Natural killer cell (primary cell): ENCODE measurements at regions of chr11 and their contacts with region 1.

Region 1: GRCh38 chr11:100575870-100576705 is 111.0 kb upstream of the ARHGAP42 start:
- DNase-seq: peak in 1 of 2 donors; percentile 20
- ATAC-seq: peak; percentile 64 to 76 (median 68)
- H3K4me3 ChIP-seq: no peak overlapping the region
- H3K4me3 Mint-ChIP-seq: no peak overlapping the region
- H3K27ac ChIP-seq: no peak overlapping the region
- H3K27ac Mint-ChIP-seq: no peak overlapping the region
- H3K4me1 ChIP-seq: no peaks in the 10 kb centered on the region
- H3K4me1 Mint-ChIP-seq: no peaks in the 10 kb centered on the region
- H3K27me3 ChIP-seq: peaks cover 4% of the 10 kb centered on the region
- H3K27me3 Mint-ChIP-seq: peaks cover 6 to 7% of the 10 kb centered on the region in 2 donors
- CTCF ChIP-seq: peak; percentile 82

Region 2: GRCh38 chr11:100855466-100856067 is 279.5 kb after region 1 on chr11:
- intact Hi-C with region 1: loop called (anchors 1 kb)
- DNase-seq: no peak
- ATAC-seq: no peak
- H3K4me3 ChIP-seq: no peak overlapping the region
- H3K4me3 Mint-ChIP-seq: no peak overlapping the region
- H3K27ac ChIP-seq: no peak overlapping the region
- H3K27ac Mint-ChIP-seq: no peak overlapping the region
- H3K4me1 ChIP-seq: no peaks in the 10 kb centered on the region
- H3K4me1 Mint-ChIP-seq: no peaks in the 10 kb centered on the region
- H3K27me3 ChIP-seq: no peaks in the 10 kb centered on the region
- H3K27me3 Mint-ChIP-seq: no peaks in the 10 kb centered on the region
- CTCF ChIP-seq: peak; percentile 50

Region 3: GRCh38 chr11:100930185-100930778 is 354.2 kb after region 1 on chr11:
- intact Hi-C with region 1: loop called (anchors 1 kb)
- DNase-seq: peak in 1 of 2 donors; percentile 25
- ATAC-seq: peak in 1 of 3 donors; percentile 36
- H3K4me3 ChIP-seq: no peak overlapping the region
- H3K4me3 Mint-ChIP-seq: no peak overlapping the region
- H3K27ac ChIP-seq: no peak overlapping the region
- H3K27ac Mint-ChIP-seq: no peak overlapping the region
- H3K4me1 ChIP-seq: no peaks in the 10 kb centered on the region
- H3K4me1 Mint-ChIP-seq: no peaks in the 10 kb centered on the region
- H3K27me3 ChIP-seq: no peaks in the 10 kb centered on the region
- H3K27me3 Mint-ChIP-seq: no peaks in the 10 kb centered on the region
- CTCF ChIP-seq: peak; percentile 75

Region 4: GRCh38 chr11:102007567-102008437 is 1431.7 kb after region 1 on chr11:
- intact Hi-C with region 1: loop called (anchors 5 kb)
- DNase-seq: peak in 1 of 2 donors; percentile 47
- ATAC-seq: peak in 2 of 3 donors; percentile 57 to 73
- H3K4me3 ChIP-seq: no peak overlapping the region
- H3K4me3 Mint-ChIP-seq: no peak overlapping the region
- H3K27ac ChIP-seq: no peak overlapping the region
- H3K27ac Mint-ChIP-seq: no peak overlapping the region
- H3K4me1 ChIP-seq: no peaks in the 10 kb centered on the region
- H3K4me1 Mint-ChIP-seq: no peaks in the 10 kb centered on the region
- H3K27me3 ChIP-seq: no peaks in the 10 kb centered on the region
- H3K27me3 Mint-ChIP-seq: peaks cover 12 to 16% of the 10 kb centered on the region in 2 donors
- CTCF ChIP-seq: peak; percentile 78